ENCODE measurements at regions of chr5 and their contacts with region 1.

Region 1: DNA sequence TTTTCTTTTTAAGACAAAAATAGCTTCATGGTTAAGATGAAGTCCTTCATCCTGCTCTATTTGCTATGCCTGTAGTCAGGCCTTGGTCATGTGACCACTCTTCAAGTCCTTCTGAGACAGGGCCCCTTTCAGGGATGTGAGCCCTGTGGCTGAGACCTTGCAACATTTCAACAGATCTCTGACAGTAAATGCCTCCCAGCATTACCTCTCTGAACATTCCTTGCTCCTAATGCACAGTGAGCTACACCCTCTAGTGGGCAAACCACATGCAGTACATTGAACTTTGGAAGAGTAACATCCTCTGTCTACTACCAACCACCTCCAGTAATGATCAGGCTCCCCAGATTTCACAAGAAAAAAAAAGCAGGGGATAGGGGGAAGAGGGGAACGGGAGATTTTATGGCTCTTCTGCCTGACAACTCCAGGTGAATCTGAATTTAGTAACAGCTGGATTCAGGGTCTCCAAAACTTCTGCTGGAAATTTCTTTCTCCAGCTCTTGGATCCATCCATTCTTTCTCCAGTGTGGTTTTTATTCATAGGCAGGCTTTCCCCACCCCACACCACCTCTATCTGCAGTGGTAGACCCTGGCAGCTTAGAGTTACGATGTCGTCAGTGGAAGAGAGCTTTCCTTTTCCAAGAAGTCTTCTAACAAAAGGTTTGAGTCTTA is 8.9 kb upstream of the FBXO38 start:
- DNase-seq: peak; percentile 27 to 57 (median 49)
- H3K4me3 ChIP-seq: no peak overlapping the region
- H3K4me3 Mint-ChIP-seq: no peak overlapping the region
- H3K27ac ChIP-seq: no peak overlapping the region
- H3K27ac Mint-ChIP-seq: peak overlapping the region in 1 of 7 donors; percentile 32
- H3K4me1 ChIP-seq: peaks cover 4 to 7% of the 10 kb centered on the region in 2 donors
- H3K4me1 Mint-ChIP-seq: peaks cover 13% of the 10 kb centered on the region
- H3K27me3 ChIP-seq: no peaks in the 10 kb centered on the region
- H3K27me3 Mint-ChIP-seq: no peaks in the 10 kb centered on the region
- CTCF ChIP-seq: peak; percentile 78

Region 2: GRCh38 chr5:148179234-148179824 is 195.5 kb before region 1 on chr5:
- intact Hi-C with region 1: loop called (anchors 5 to 10 kb)
- DNase-seq: peak; percentile 62 to 81 (median 77)
- H3K4me3 ChIP-seq: no peak overlapping the region
- H3K4me3 Mint-ChIP-seq: no peak overlapping the region
- H3K27ac ChIP-seq: no peak overlapping the region
- H3K27ac Mint-ChIP-seq: no peak overlapping the region
- H3K4me1 ChIP-seq: no peaks in the 10 kb centered on the region
- H3K4me1 Mint-ChIP-seq: peaks cover 2% of the 10 kb centered on the region
- H3K27me3 ChIP-seq: no peaks in the 10 kb centered on the region
- H3K27me3 Mint-ChIP-seq: peaks cover 1 to 5% (median 2%) of the 10 kb centered on the region in 3 donors
- CTCF ChIP-seq: peak; percentile 83

Region 3: DNA sequence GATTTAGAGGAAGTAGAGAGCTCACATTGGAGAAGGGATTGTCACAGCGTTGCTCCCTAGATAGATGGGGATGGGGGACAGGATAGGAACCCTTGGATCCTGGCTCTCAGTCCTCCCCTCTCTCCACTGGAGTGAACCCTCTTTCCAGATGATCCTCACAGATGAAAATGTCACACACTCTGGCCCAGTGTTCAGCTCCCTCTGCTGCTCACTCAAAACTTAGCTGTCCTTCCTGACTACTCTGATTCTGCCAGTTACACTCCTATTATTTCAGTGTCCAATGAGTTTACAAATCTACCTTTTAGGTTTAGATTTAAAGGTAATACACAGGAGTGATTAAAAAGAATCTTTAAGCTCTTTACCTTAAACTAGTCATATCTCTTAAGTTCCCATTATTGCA is 68.4 kb before region 1 on chr5:
- intact Hi-C with region 1: no loop called
- DNase-seq: no peak
- H3K4me3 ChIP-seq: no peak overlapping the region
- H3K4me3 Mint-ChIP-seq: no peak overlapping the region
- H3K27ac ChIP-seq: no peak overlapping the region
- H3K27ac Mint-ChIP-seq: no peak overlapping the region
- H3K4me1 ChIP-seq: no peaks in the 10 kb centered on the region
- H3K4me1 Mint-ChIP-seq: no peaks in the 10 kb centered on the region
- H3K27me3 ChIP-seq: no peaks in the 10 kb centered on the region
- H3K27me3 Mint-ChIP-seq: peaks cover 0 to 2% (median 0%) of the 10 kb centered on the region in 3 donors
- CTCF ChIP-seq: no peak

Region 4: GRCh38 chr5:148559461-148559860 is 184.6 kb after region 1 on chr5:
- intact Hi-C with region 1: no loop called
- DNase-seq: no peak
- H3K4me3 ChIP-seq: no peak overlapping the region
- H3K4me3 Mint-ChIP-seq: no peak overlapping the region
- H3K27ac ChIP-seq: no peak overlapping the region
- H3K27ac Mint-ChIP-seq: no peak overlapping the region
- H3K4me1 ChIP-seq: no peaks in the 10 kb centered on the region
- H3K4me1 Mint-ChIP-seq: no peaks in the 10 kb centered on the region
- H3K27me3 ChIP-seq: no peaks in the 10 kb centered on the region
- H3K27me3 Mint-ChIP-seq: peaks cover 1 to 4% (median 3%) of the 10 kb centered on the region in 3 donors
- CTCF ChIP-seq: no peak